Transverse colon (tissue), 4 donors: ENCODE measurements at regions of chrX and their contacts with region 1.

Region 1: GRCh38 chrX:6325437-6325836 is 96.8 kb upstream of the NLGN4X start:
- DNase-seq: no peak
- H3K4me3 ChIP-seq: no peak overlapping the region
- H3K27ac ChIP-seq: no peak overlapping the region
- H3K4me1 ChIP-seq: no peaks in the 10 kb centered on the region
- H3K27me3 ChIP-seq: no peaks in the 10 kb centered on the region
- CTCF ChIP-seq: no peak
- EP300 ChIP-seq: no peak
- POLR2A ChIP-seq: no peak

Region 2: GRCh38 chrX:5928224-5928623 is 397.2 kb before region 1 on chrX:
- in situ Hi-C with region 1: no loop called
- intact Hi-C with region 1: no loop called
- DNase-seq: no peak
- H3K4me3 ChIP-seq: no peak overlapping the region
- H3K27ac ChIP-seq: no peak overlapping the region
- H3K4me1 ChIP-seq: no peaks in the 10 kb centered on the region
- H3K27me3 ChIP-seq: no peaks in the 10 kb centered on the region
- CTCF ChIP-seq: no peak
- EP300 ChIP-seq: no peak
- POLR2A ChIP-seq: no peak

Region 3: GRCh38 chrX:6384371-6384770 is 58.9 kb after region 1 on chrX:
- in situ Hi-C with region 1: no loop called
- intact Hi-C with region 1: loop called (anchors 10 kb)
- DNase-seq: no peak
- H3K4me3 ChIP-seq: no peak overlapping the region
- H3K27ac ChIP-seq: no peak overlapping the region
- H3K4me1 ChIP-seq: no peaks in the 10 kb centered on the region
- H3K27me3 ChIP-seq: no peaks in the 10 kb centered on the region
- CTCF ChIP-seq: no peak
- EP300 ChIP-seq: no peak
- POLR2A ChIP-seq: no peak